ENCODE measurements at regions of chr7 and their contacts with region 1.

Region 1: GRCh38 chr7:2760098-2760889 is 72.3 kb downstream of the AMZ1 start:
- DNase-seq: peak; percentile 64
- ATAC-seq: peak; percentile 77

Region 2: GRCh38 chr7:2844165-2844898 is 84.0 kb after region 1 on chr7 and contains the start of gene GNA12:
- intact Hi-C with region 1: loop called (anchors 10 kb)
- DNase-seq: peak; percentile 99
- ATAC-seq: peak; percentile 97
- total RNA-seq, gene GNA12: 40.4 TPM